ENCODE measurements at regions of chr19 and their contacts with region 1.

Region 1: GRCh38 chr19:45886427-45887199 is 672 bp upstream of the IRF2BP1 start:
- DNase-seq: peak; percentile 73
- ATAC-seq: peak; percentile 78
- H3K4me3 ChIP-seq: peak overlapping the region; percentile 51 to 69
- H3K27ac ChIP-seq: peak overlapping the region; percentile 93
- H3K4me1 ChIP-seq: peaks cover 9% of the 10 kb centered on the region
- H3K27me3 ChIP-seq: no peaks in the 10 kb centered on the region
- CTCF ChIP-seq: no peak

Region 2: GRCh38 chr19:45792470-45793177 is 94.0 kb before region 1 on chr19 and contains the start of gene DMWD:
- CTCF ChIA-PET with region 1: no interaction called
- POLR2A ChIA-PET with region 1: no interaction called
- in situ Hi-C with region 1: no loop called
- intact Hi-C with region 1: no loop called
- DNase-seq: peak; percentile 75
- ATAC-seq: peak; percentile 98
- H3K4me3 ChIP-seq: peak within 1 kb of the TSS; percentile 73 to 91
- H3K27ac ChIP-seq: peak within 1 kb of the TSS; percentile 87
- H3K4me1 ChIP-seq: no peaks in the 10 kb centered on the region
- H3K27me3 ChIP-seq: no peaks in the 10 kb centered on the region
- CTCF ChIP-seq: no peak
- total RNA-seq, gene DMWD: 64.6 TPM

Region 3: DNA sequence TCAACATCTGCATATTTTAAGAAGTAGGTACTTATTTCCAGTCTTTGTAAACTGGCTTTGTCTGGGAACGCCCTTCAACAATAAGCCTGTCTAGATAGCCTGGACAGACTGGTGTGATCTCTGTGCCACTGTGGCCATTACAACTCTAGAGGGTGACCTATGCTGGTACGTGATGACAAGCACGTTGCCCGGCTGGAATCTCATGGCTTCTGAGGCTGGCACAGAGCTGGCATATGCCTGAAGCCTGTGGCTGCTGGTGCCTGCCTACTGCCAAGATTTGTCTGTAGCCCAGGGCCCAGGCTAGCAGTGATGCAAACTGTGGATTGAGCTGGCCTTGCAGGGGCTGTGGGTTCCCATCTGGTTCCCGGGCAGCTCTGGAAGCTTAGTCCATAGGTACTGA is 203.8 kb after region 1 on chr19:
- CTCF ChIA-PET with region 1: no interaction called
- POLR2A ChIA-PET with region 1: no interaction called
- in situ Hi-C with region 1: no loop called
- intact Hi-C with region 1: no loop called
- DNase-seq: no peak
- ATAC-seq: no peak
- H3K4me3 ChIP-seq: no peak overlapping the region
- H3K27ac ChIP-seq: no peak overlapping the region
- H3K4me1 ChIP-seq: no peaks in the 10 kb centered on the region
- H3K27me3 ChIP-seq: 0 out of 2 replicates have a peak, but pooled peaks cover 4% of the 10 kb centered on the region
- CTCF ChIP-seq: no peak

Region 4: DNA sequence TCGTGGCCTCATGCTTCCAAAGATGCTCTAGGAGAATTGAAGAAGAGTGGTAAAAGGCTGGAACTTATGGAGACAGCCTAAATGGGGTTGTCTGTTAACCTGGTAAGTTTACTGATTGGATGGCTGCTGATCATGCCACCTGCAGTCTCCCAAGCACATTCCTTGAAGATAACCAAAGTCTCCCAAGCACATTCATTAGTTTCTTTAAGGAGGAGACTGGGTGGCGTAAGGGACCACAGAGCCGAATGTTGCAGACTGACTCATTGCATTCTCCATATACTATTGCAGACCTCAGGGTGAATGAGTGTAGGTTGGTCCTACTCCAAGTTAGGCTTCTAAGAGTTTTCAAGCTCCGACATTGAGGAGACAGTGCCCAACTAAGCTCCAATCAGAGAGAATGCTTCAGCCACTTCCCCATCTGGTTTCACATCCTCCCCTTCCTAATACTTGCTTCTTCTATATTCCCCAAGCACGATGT is 238.1 kb after region 1 on chr19 and contains the start of gene IGFL3:
- CTCF ChIA-PET with region 1: interaction called, 10 read pairs
- POLR2A ChIA-PET with region 1: no interaction called
- in situ Hi-C with region 1: no loop called
- intact Hi-C with region 1: no loop called
- DNase-seq: no peak
- ATAC-seq: no peak
- H3K4me3 ChIP-seq: no peak within 1 kb of the TSS
- H3K27ac ChIP-seq: no peak within 1 kb of the TSS
- H3K4me1 ChIP-seq: no peaks in the 10 kb centered on the region
- H3K27me3 ChIP-seq: peaks cover 8% of the 10 kb centered on the region; the same call in 1 of the 2 replicates
- CTCF ChIP-seq: no peak
- total RNA-seq, gene IGFL3: not detected

Measured in Panc1 (cell line).